ENCODE measurements at regions of chr10 and their contacts with region 1.

Region 1: GRCh38 chr10:80260295-80261243 is 28.9 kb downstream of the MAT1A start:
- DNase-seq: peak; percentile 55
- H3K4me3 Mint-ChIP-seq: no peak overlapping the region
- H3K27ac Mint-ChIP-seq: no peak overlapping the region
- H3K4me1 Mint-ChIP-seq: peaks cover 5% of the 10 kb centered on the region
- H3K27me3 Mint-ChIP-seq: peaks cover 25% of the 10 kb centered on the region
- CTCF ChIP-seq: peak; percentile 90

Region 2: DNA sequence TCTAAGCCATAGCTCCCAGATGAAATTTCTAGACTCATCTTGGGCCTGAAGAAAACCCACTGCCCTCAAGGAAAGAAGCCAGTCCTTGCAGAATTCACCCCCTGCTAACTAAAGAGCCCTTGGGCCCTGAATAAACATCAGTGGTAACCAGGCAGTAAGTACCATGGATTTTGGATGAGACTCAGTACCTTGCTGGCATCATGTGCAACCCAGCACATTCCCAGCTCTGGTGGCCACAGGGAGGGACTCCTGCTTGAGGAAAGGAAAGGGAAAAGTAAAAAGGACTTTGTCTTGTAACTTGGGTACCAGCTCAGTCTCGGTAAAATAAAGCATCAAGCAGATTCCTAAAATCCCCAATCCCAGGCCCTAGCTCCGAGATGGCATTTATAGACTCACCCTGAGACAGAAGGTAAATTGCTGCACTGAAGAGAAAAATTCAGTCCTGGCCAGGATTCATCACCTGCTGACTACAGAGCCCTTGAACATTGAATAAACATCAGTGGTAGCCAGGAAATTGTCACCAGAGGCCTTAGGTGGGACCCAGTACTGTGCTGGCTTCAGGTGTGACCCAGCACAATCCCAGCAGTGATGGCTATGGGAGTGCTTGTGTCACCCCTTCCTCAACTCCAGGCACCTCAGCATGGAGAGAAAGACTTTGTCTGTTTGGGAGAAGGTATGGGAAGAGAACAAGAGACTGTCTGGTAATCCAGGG is 280.4 kb before region 1 on chr10:
- CTCF ChIA-PET with region 1: no interaction called
- POLR2A ChIA-PET with region 1: no interaction called
- intact Hi-C with region 1: no loop called
- DNase-seq: no peak
- H3K4me3 Mint-ChIP-seq: no peak overlapping the region
- H3K27ac Mint-ChIP-seq: no peak overlapping the region
- H3K4me1 Mint-ChIP-seq: peaks cover 17% of the 10 kb centered on the region
- H3K27me3 Mint-ChIP-seq: no peaks in the 10 kb centered on the region
- CTCF ChIP-seq: no peak

Region 3: GRCh38 chr10:80272793-80273517 is 12.4 kb after region 1 on chr10:
- CTCF ChIA-PET with region 1: interaction called, 21 read pairs
- POLR2A ChIA-PET with region 1: no interaction called
- intact Hi-C with region 1: no loop called
- DNase-seq: no peak
- H3K4me3 Mint-ChIP-seq: no peak overlapping the region
- H3K27ac Mint-ChIP-seq: no peak overlapping the region
- H3K4me1 Mint-ChIP-seq: no peaks in the 10 kb centered on the region
- H3K27me3 Mint-ChIP-seq: no peaks in the 10 kb centered on the region
- CTCF ChIP-seq: no peak

Measured in MCF 10A (cell line).